Endothelial cell of umbilical vein (primary cell): ENCODE measurements at regions of chr20 and their contacts with region 1.

Region 1: GRCh38 chr20:62121776-62122631 is at the start of gene LSM14B:
- DNase-seq: peak; percentile 98
- H3K4me3 ChIP-seq: peak within 1 kb of the TSS; percentile 68 to 76 (median 75)
- H3K27ac ChIP-seq: peak within 1 kb of the TSS; percentile 57
- H3K4me1 ChIP-seq: peaks cover 11% of the 10 kb centered on the region
- H3K27me3 ChIP-seq: peaks cover 9 to 15% of the 10 kb centered on the region in 2 experiments
- CTCF ChIP-seq: no peak
- POLR2A ChIP-seq: peak; percentile 24
- total RNA-seq, gene LSM14B: 31.1 and 34.0 TPM in 2 replicates

Region 2: DNA sequence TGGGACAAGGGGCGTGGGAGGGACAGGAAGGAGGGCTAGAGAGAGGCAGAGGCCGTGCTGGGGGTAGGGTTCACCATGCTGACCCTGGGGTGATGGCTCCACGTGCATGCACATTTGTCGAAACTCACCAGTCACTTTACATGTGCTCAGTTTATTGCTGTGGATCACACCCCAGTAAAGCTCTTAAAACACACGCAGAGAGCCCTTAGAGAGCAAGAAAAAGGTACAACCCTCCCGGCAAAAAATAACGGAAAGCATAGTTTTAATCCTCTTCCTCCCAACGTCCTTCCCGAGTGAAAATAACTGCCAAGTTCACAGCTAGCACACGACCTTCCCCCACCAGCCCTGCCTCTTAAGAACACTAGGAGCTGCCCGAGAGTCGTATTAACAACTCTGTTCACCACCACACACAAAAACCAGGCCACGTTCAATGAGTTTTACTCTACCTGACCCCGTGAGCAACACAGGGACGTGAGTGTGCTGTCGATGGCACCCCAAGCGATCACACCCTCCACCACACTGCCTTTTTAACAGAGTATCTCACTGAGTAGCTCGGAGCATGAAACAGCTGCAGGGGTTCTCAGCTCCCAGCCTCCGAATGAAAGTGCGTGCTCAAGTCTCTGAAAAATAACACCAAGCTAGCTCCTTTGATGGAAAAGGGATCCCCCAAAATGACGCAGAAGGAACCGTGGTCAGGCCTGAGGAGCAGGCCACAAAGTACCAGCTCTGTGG is 96.0 kb before region 1 on chr20:
- CTCF ChIA-PET with region 1: interaction called, 10 read pairs
- POLR2A ChIA-PET with region 1: no interaction called
- dilution Hi-C with region 1: no loop called
- intact Hi-C with region 1: loop called (anchors 5 kb)
- DNase-seq: peak; percentile 78
- H3K4me3 ChIP-seq: no peak overlapping the region
- H3K27ac ChIP-seq: no peak overlapping the region
- H3K4me1 ChIP-seq: peaks cover 10% of the 10 kb centered on the region
- H3K27me3 ChIP-seq: no peaks in the 10 kb centered on the region
- CTCF ChIP-seq: peak; percentile 65 to 85
- POLR2A ChIP-seq: no peak

Region 3: DNA sequence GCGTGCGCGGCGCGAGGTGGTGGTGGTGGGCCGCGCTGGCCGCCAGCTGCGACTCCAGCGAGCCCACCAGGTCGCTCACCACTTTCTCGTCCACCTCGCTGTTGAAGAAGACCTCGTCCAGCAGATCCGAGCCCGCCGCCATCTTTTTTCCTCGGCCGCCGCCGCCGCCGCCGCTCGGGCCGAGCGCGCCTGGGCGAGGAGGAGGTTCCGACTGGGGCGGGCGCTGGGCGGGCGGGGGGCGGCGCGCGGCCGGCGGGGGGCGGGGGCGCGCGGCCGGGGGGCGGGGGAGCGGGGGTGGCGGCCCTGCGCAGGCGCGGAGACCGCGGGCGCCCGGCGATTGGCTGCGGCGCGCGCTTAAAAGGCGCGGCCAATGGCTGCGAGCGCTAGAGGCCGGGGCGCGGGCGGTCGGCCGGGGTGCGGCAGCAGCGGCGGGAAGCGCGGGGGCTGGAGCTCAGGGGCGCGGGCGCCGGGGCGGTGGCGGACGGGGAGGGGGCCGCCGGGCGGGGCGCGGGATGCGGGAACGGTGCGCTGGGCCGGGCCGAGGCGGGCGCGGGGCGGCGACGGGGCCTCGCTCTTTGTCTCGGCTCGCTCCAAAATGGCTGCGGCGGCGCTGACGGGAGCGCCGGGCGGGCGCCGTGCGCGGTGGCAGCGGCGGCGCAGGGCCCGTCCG is 56.2 kb before region 1 on chr20 and contains the start of gene TAF4:
- CTCF ChIA-PET with region 1: no interaction called
- POLR2A ChIA-PET with region 1: interaction called, 18 read pairs
- dilution Hi-C with region 1: no loop called
- intact Hi-C with region 1: loop called (anchors 1 kb)
- DNase-seq: peak; percentile 58
- H3K4me3 ChIP-seq: peak within 1 kb of the TSS; percentile 25 to 55 (median 53)
- H3K27ac ChIP-seq: peak within 1 kb of the TSS; percentile 47
- H3K4me1 ChIP-seq: peaks cover 16% of the 10 kb centered on the region
- H3K27me3 ChIP-seq: no peaks in the 10 kb centered on the region
- CTCF ChIP-seq: no peak
- POLR2A ChIP-seq: peak; percentile 97
- total RNA-seq, gene TAF4: 15.2 and 19.5 TPM in 2 replicates

Region 4: GRCh38 chr20:62136283-62137091 is 14.5 kb after region 1 on chr20:
- CTCF ChIA-PET with region 1: interaction called, 15 read pairs
- POLR2A ChIA-PET with region 1: no interaction called
- dilution Hi-C with region 1: no loop called
- intact Hi-C with region 1: no loop called
- DNase-seq: peak; percentile 84
- H3K4me3 ChIP-seq: no peak overlapping the region
- H3K27ac ChIP-seq: no peak overlapping the region
- H3K4me1 ChIP-seq: no peaks in the 10 kb centered on the region
- H3K27me3 ChIP-seq: no peaks in the 10 kb centered on the region
- CTCF ChIP-seq: peak; percentile 81
- POLR2A ChIP-seq: no peak

Region 5: GRCh38 chr20:62143118-62143973 is 21.3 kb after region 1 on chr20 and contains the starts of genes PSMA7 and SS18L1:
- CTCF ChIA-PET with region 1: interaction called, 4 read pairs
- POLR2A ChIA-PET with region 1: no interaction called
- dilution Hi-C with region 1: no loop called
- intact Hi-C with region 1: loop called (anchors 2 kb)
- DNase-seq: peak; percentile 81
- H3K4me3 ChIP-seq: peak within 1 kb of the TSS; percentile 59 to 80 (median 69)
- H3K27ac ChIP-seq: peak within 1 kb of the TSS; percentile 88
- H3K4me1 ChIP-seq: peaks cover 8% of the 10 kb centered on the region
- H3K27me3 ChIP-seq: no peaks in the 10 kb centered on the region
- CTCF ChIP-seq: no peak
- POLR2A ChIP-seq: peak; percentile 70
- total RNA-seq, gene PSMA7: 389 and 393 TPM in 2 replicates
- total RNA-seq, gene SS18L1: 21.7 and 22.1 TPM in 2 replicates